ENCODE measurements at regions of chr5 and their contacts with region 1.

Region 1: DNA sequence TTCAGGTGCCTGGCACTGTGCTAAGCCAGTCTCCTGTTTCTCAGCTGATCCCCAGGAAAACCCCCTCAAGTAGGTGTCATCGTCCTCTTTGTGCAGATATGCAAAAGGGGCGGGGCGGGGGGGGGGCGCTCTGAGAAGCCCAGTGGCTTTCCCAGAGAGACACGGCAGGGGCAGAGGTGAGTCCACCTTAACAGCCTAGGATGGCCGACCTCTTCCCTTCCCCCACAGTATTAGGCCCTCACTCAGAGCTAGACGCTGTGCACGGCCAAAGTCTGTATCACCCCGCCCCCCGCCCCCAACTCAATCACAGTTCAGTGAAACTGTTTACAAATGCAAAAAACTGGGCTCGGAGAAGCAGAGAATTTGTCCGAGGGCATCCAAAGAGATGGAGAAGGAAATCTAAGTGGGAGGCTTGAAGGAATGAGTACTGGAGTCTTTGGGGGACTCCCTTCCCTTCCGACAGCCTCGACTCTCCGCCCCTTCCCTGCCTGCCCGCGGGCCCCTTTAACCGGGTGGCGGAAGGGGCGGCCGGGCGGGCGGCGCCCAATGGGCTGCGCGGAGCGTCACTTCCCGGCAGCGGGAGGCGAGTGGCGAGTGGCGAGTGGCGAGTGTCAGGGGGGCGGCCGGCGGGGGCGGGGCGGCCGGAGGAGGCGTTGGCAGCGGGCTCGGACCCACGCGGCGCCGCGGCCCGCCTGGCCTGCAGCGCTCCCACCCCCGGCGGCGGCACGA is at the start of gene ERGIC1:
- DNase-seq: peak; percentile 71 to 80 (median 74)
- H3K4me3 ChIP-seq: peak within 1 kb of the TSS; percentile 59
- H3K4me3 Mint-ChIP-seq: peak within 1 kb of the TSS; percentile 90 to 96 (median 92)
- H3K27ac ChIP-seq: peak within 1 kb of the TSS; percentile 55
- H3K27ac Mint-ChIP-seq: peak within 1 kb of the TSS; percentile 89 to 99 (median 96)
- H3K4me1 ChIP-seq: peaks cover 36% of the 10 kb centered on the region
- H3K4me1 Mint-ChIP-seq: peaks cover 33 to 48% (median 38%) of the 10 kb centered on the region in 3 donors
- H3K27me3 ChIP-seq: no peaks in the 10 kb centered on the region
- H3K27me3 Mint-ChIP-seq: no peaks in the 10 kb centered on the region
- total RNA-seq, gene ERGIC1: 39.7 to 39.9 TPM

Region 2: GRCh38 chr5:172788771-172789686 is 44.8 kb before region 1 on chr5:
- CTCF ChIA-PET with region 1: no interaction called
- POLR2A ChIA-PET with region 1: no interaction called
- DNase-seq: no peak
- H3K4me3 ChIP-seq: no peak overlapping the region
- H3K4me3 Mint-ChIP-seq: no peak overlapping the region
- H3K27ac ChIP-seq: peak overlapping the region; percentile 82
- H3K27ac Mint-ChIP-seq: peak overlapping the region in 3 of 8 donors; percentile 17 to 50 (median 33)
- H3K4me1 ChIP-seq: no peaks in the 10 kb centered on the region
- H3K4me1 Mint-ChIP-seq: peaks cover 0 to 4% (median 1%) of the 10 kb centered on the region in 3 donors
- H3K27me3 ChIP-seq: no peaks in the 10 kb centered on the region
- H3K27me3 Mint-ChIP-seq: no peaks in the 10 kb centered on the region

Region 3: DNA sequence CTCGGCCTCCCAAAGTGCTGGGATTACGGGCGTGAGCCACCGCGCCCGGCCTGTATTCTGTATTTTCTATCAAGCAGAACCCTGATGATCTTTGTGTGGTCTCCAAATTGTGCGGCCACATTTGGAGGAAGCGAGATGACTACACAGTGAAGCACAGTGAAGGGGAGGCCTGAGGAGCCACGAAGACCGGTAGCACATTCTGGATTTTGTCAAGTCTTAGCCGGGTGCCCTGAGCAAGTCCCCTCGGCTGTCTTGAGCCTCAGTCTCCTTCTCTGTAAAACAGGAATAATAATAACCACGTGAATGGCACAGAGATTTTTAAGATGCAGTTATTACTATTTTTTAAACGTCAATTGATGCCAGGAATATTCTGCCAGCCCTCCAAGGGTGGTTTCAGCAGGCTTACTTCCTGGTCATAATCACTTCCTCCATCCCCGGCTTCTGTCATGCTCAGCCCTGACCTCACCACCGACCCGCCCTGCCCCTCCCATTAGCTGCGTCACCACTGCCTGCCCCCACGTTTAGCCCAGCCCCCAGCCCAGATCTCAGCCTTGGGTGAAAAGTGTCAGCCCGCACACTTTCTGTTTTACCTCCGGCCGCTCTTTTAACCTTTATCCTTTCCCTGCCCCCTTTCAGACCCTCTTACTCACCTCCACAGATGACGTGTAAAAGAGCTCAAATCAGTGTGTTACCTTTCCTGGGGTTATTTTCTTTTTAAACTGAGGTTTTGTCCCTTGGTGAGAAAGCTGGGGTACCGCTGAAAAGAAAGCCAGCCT is 26.8 kb before region 1 on chr5:
- CTCF ChIA-PET with region 1: no interaction called
- POLR2A ChIA-PET with region 1: interaction called, 12 read pairs
- DNase-seq: peak; percentile 56 to 91 (median 80)
- H3K4me3 ChIP-seq: peak overlapping the region; percentile 59
- H3K4me3 Mint-ChIP-seq: peak overlapping the region; percentile 13 to 90 (median 81)
- H3K27ac ChIP-seq: peak overlapping the region; percentile 76
- H3K27ac Mint-ChIP-seq: peak overlapping the region; percentile 83 to 97 (median 95)
- H3K4me1 ChIP-seq: peaks cover 11% of the 10 kb centered on the region
- H3K4me1 Mint-ChIP-seq: peaks cover 13 to 19% (median 14%) of the 10 kb centered on the region in 3 donors
- H3K27me3 ChIP-seq: no peaks in the 10 kb centered on the region
- H3K27me3 Mint-ChIP-seq: no peaks in the 10 kb centered on the region

Region 4: GRCh38 chr5:172860520-172861443 is 26.9 kb after region 1 on chr5:
- CTCF ChIA-PET with region 1: no interaction called
- POLR2A ChIA-PET with region 1: no interaction called
- DNase-seq: no peak
- H3K4me3 ChIP-seq: no peak overlapping the region
- H3K4me3 Mint-ChIP-seq: peak overlapping the region in 5 of 7 donors; percentile 3 to 67 (median 23)
- H3K27ac ChIP-seq: no peak overlapping the region
- H3K27ac Mint-ChIP-seq: peak overlapping the region in 7 of 8 donors; percentile 75 to 90 (median 86)
- H3K4me1 ChIP-seq: no peaks in the 10 kb centered on the region
- H3K4me1 Mint-ChIP-seq: peaks cover 33 to 52% (median 45%) of the 10 kb centered on the region in 3 donors
- H3K27me3 ChIP-seq: no peaks in the 10 kb centered on the region
- H3K27me3 Mint-ChIP-seq: no peaks in the 10 kb centered on the region